A673 (cell line): ENCODE measurements at regions of chr11 and their contacts with region 1.

Region 1: GRCh38 chr11:112100462-112100861 is 13.8 kb downstream of the SDHD start:
- DNase-seq: no peak
- H3K4me3 ChIP-seq: no peak overlapping the region
- H3K27ac ChIP-seq: no peak overlapping the region
- H3K4me1 ChIP-seq: no peaks in the 10 kb centered on the region
- H3K27me3 ChIP-seq: no peaks in the 10 kb centered on the region
- CTCF ChIP-seq: no peak

Region 2: DNA sequence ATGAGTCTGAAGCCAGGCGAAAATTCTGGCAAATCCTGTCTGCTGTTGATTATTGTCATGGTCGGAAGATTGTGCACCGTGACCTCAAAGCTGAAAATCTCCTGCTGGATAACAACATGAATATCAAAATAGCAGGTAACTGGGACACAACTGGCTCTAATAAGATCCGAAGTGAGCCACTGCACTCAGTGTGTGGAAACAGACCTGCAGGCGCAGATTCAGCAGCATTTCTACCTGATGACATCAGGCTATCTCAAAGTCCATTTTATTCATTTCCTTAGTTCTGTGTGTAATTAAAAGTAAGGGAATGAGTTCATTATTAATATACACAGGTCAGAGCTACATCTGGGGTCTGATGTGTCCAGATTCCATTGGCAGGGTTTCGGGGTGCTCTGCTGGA is 412.4 kb before region 1 on chr11:
- CTCF ChIA-PET with region 1: no interaction called
- POLR2A ChIA-PET with region 1: interaction called, 12 read pairs
- intact Hi-C with region 1: no loop called
- DNase-seq: no peak
- H3K4me3 ChIP-seq: no peak overlapping the region
- H3K27ac ChIP-seq: no peak overlapping the region
- H3K4me1 ChIP-seq: no peaks in the 10 kb centered on the region
- H3K27me3 ChIP-seq: no peaks in the 10 kb centered on the region
- CTCF ChIP-seq: no peak

Region 3: DNA sequence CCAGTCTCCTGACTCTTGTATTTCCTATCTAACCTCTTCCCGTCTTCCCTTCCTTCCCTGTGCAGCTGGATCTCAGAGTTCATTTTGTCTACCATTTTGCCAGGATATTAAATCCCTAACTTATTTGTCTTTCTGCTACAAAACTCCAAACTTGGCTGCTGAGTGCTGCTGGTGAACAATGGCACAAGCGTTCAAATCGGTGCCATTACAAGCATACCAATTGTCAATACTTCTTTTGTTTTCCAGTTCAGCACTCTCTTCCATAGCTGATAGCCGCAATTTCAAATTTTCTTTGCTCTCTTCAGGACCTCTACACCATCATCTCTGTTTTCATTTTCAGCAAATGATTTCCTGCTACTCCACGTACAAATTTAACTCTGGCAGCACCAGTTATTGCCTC is 50.1 kb after region 1 on chr11:
- CTCF ChIA-PET with region 1: no interaction called
- POLR2A ChIA-PET with region 1: interaction called, 12 read pairs
- intact Hi-C with region 1: no loop called
- DNase-seq: no peak
- H3K4me3 ChIP-seq: no peak overlapping the region
- H3K27ac ChIP-seq: no peak overlapping the region
- H3K4me1 ChIP-seq: peaks cover 6% of the 10 kb centered on the region
- H3K27me3 ChIP-seq: no peaks in the 10 kb centered on the region
- CTCF ChIP-seq: no peak

Region 4: GRCh38 chr11:112364962-112365481 is 264.6 kb after region 1 on chr11:
- CTCF ChIA-PET with region 1: no interaction called
- POLR2A ChIA-PET with region 1: no interaction called
- intact Hi-C with region 1: no loop called
- DNase-seq: no peak
- H3K4me3 ChIP-seq: no peak overlapping the region
- H3K27ac ChIP-seq: no peak overlapping the region
- H3K4me1 ChIP-seq: no peaks in the 10 kb centered on the region
- H3K27me3 ChIP-seq: no peaks in the 10 kb centered on the region
- CTCF ChIP-seq: no peak